HCT116 (cell line): ENCODE measurements at regions of chr12 and their contacts with region 1.

Region 1: DNA sequence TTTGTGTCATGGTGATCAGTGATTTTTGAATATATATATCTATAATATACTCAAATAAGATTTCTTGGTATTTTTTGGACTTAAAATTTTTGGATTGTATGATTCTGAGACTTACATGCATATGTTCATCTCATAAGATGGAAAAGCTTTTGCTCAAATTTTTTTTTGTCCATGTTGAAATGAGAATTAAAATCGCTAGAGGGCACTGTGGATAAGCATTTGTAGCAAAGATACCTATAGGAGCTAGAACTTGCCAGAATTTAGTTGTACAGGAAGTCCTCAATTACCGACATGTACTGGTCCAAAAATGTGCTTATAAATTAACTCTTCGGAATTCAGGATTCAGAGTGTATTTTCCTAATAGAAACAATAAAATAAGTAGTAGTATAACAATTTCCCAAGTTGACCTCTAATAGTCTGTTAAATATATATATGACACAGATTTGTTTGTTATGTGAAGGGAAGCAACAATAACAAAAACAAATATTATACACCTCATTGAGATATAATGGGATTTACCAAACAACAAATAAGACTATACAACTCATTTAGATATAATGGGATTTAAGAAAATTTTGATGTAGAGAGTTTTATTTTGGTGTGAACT is 179.6 kb downstream of the TMEM117 start:
- DNase-seq: peak; percentile 34
- ATAC-seq: peak; percentile 54
- H3K4me3 ChIP-seq: no peak overlapping the region
- H3K27ac ChIP-seq: no peak overlapping the region
- H3K4me1 ChIP-seq: no peaks in the 10 kb centered on the region
- H3K27me3 ChIP-seq: no peaks in the 10 kb centered on the region
- CTCF ChIP-seq: peak; percentile 42 to 63 (median 53); a peak in 5 of 6 replicates
- POLR2A ChIP-seq: no peak
- RAD21 ChIP-seq: peak; percentile 73

Region 2: DNA sequence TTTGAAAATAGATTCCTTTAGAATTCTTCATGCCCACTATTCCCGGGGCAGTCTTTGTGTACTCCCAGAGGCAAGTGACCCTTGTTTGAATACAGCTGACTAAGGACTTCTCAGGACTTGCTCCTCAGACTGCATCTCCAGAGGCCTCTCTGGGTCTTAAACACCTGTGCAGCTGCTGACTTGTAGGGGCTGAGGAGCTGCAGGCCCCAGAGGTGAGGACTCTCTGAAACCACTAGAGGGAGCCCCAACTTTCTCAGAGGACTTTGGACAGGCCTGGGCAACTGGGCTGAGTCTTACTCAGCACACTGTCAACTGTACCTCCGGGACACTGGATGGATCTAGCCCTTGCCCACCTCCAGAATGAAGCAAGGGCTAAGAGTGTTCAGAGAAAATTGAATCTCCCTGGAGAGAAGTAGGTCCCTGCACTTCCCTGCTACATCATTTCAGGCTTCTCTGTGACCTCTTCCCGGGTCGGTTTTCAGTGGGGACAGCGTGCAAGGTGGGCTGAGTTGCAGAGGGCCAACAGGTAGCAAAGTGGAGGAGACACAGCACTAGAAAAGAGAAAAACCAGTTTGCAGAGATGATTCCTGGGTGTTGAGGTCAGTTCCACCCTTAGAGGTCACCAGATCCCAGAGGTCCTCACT is 15.0 kb before region 1 on chr12:
- CTCF ChIA-PET with region 1: interaction called, 14 read pairs
- POLR2A ChIA-PET with region 1: no interaction called
- RAD21 ChIA-PET with region 1: no interaction called
- intact Hi-C with region 1: no loop called
- DNase-seq: peak; percentile 60
- ATAC-seq: peak; percentile 100
- H3K4me3 ChIP-seq: no peak overlapping the region
- H3K27ac ChIP-seq: no peak overlapping the region
- H3K4me1 ChIP-seq: no peaks in the 10 kb centered on the region
- H3K27me3 ChIP-seq: no peaks in the 10 kb centered on the region
- CTCF ChIP-seq: peak; percentile 52 to 86 (median 75)
- POLR2A ChIP-seq: no peak
- RAD21 ChIP-seq: peak; percentile 48

Region 3: GRCh38 chr12:44046732-44047417 is 31.4 kb after region 1 on chr12:
- CTCF ChIA-PET with region 1: no interaction called
- POLR2A ChIA-PET with region 1: no interaction called
- RAD21 ChIA-PET with region 1: no interaction called
- intact Hi-C with region 1: no loop called
- DNase-seq: no peak
- ATAC-seq: no peak
- H3K4me3 ChIP-seq: no peak overlapping the region
- H3K27ac ChIP-seq: no peak overlapping the region
- H3K4me1 ChIP-seq: no peaks in the 10 kb centered on the region
- H3K27me3 ChIP-seq: no peaks in the 10 kb centered on the region
- CTCF ChIP-seq: no peak
- POLR2A ChIP-seq: no peak
- RAD21 ChIP-seq: no peak